ENCODE measurements at regions of chr11 and their contacts with region 1.

Region 1: DNA sequence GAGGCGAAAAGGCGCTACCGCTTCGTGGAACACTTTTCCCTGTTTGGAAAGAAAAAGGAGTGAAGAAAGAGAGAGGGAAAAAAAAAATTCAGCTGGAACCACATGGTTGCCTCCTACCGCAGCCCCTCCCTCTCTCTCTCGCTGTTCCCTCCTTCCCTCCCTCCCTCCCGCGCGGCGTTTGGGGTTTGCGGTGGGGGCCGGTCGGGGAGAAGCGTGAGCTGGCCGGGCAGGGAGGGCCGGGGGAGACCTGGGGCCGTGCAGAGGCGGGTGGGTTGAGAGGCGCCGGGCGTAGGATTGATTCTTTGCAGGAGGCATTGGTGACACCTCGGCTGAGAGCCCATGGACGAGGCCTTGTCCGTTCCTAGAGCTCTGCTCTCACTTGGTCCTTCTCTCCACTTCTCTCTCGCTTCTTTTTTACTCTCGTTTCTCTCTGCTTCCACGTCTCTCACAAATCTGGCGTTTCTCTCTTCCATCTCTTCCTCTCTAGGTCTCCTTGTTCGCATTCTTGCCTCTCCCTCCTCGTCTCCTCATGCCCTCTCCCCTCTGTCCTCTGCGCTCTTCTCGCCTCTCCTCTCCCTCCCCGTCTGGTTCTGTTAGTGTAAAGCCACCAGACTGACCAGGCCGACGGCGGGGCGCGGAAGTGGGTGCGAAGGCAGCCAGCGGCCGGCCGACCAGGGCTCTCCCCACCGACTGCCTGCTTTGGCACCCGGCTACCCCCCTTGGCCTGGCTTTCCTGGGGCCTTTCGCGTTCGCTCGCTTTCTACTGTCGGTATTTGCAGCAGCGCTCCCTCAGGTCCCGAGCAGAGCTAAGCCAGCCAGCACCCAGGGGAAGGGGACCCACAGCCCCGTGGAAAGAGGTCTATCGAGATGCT is at the start of gene CLMP:
- DNase-seq: peak; percentile 54 to 87
- H3K4me3 ChIP-seq: peak within 1 kb of the TSS; percentile 76 to 79
- H3K27ac ChIP-seq: peak within 1 kb of the TSS; percentile 92 to 96
- H3K4me1 ChIP-seq: peaks cover 0 to 13% of the 10 kb centered on the region in 2 donors
- H3K27me3 ChIP-seq: no peaks in the 10 kb centered on the region
- CTCF ChIP-seq: no peak
- total RNA-seq, gene CLMP: 70.6 TPM

Region 2: DNA sequence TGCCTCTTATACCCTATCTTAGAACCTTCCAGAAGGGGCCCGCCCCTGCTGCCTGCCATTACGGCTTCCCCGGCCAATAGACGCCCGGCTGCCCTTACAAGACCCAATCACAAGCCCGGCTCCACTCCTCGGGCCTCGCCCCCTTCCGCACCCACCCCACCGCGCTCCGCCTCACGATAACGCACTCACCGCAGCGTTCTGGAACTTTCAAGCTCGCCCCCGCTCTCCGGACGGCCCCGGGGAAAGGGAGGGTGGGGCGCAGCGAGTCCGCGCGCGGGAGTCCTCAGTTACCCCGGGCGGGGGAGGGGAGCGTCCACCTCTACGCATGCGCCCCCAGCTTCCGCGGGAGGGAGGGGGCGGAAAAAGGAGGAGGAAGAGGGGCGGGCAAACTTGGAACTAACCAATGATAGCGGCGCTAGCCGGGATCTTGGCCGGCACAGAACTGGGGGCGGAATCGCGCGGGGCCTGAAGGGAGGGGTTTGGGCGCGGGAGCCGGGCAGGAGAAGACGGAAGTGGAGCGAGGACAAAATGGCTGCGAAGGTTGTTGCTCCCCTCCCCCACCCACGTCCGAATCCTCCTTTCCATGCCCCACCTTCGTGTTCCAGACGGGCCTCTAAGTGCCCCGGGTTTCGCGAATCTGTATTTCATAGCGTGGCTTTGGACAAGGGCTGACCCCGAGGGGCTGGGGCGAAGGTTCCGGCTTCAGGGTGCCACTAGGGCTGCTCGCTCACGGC is 133.1 kb before region 1 on chr11:
- intact Hi-C with region 1: loop called (anchors 5 kb)
- DNase-seq: peak; percentile 99 to 100
- H3K4me3 ChIP-seq: peak overlapping the region; percentile 83 to 88
- H3K27ac ChIP-seq: peak overlapping the region; percentile 98 to 100
- H3K4me1 ChIP-seq: peaks cover 6 to 41% of the 10 kb centered on the region in 2 donors
- H3K27me3 ChIP-seq: no peaks in the 10 kb centered on the region
- CTCF ChIP-seq: no peak

Region 3: DNA sequence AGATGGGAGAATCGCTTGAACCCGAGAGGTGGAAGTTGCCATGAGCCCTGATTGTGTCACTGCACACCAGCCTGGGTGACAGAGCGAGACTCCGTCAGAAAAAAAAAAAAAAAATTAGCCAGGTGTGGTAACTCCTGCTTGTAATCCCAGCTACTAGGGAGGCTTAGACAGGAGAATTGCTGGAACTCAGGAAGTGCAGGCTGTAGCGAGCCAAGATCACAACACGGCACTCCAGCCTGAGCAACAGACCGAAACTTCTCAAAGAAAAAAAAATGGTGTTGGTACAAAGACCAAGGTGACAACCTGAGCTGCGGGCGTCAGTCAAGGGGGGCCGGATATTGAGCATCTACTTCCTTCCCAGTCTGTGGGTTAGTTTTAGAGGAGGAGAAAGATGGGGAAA is 85.1 kb before region 1 on chr11:
- intact Hi-C with region 1: loop called (anchors 2 kb)
- DNase-seq: no peak
- H3K4me3 ChIP-seq: no peak overlapping the region
- H3K27ac ChIP-seq: peak overlapping the region; percentile 76 to 80
- H3K4me1 ChIP-seq: peaks cover 5 to 21% of the 10 kb centered on the region in 2 donors
- H3K27me3 ChIP-seq: no peaks in the 10 kb centered on the region
- CTCF ChIP-seq: no peak

Region 4: GRCh38 chr11:123122341-123122740 is 73.1 kb before region 1 on chr11:
- intact Hi-C with region 1: loop called (anchors 2 kb)
- DNase-seq: peak in 1 of 2 donors; percentile 89
- H3K4me3 ChIP-seq: peak overlapping the region in 1 of 2 donors; percentile 4
- H3K27ac ChIP-seq: peak overlapping the region; percentile 89 to 91
- H3K4me1 ChIP-seq: peaks cover 3 to 31% of the 10 kb centered on the region in 2 donors
- H3K27me3 ChIP-seq: no peaks in the 10 kb centered on the region
- CTCF ChIP-seq: no peak

Region 5: DNA sequence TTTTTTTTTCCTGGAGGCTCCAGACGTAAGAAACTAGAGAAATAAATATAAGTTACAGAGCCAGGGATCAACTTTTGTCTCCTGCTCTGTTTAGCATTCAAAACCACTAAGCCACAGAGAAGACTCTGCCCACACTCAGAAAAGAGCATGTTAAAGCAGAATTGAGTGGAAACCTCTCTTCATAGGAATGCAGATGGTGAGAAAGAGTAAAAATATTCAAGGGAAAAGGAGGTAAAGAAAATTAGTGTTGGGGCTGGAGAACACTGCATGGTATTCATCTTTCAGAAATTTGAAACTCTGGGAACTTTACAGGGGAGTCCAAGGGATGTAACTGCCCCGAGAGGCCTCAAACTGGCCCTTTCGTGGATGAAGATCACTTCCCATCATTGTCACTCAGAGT is 65.5 kb before region 1 on chr11:
- intact Hi-C with region 1: loop called (anchors 2 kb)
- DNase-seq: no peak
- H3K4me3 ChIP-seq: no peak overlapping the region
- H3K27ac ChIP-seq: peak overlapping the region in 1 of 2 donors; percentile 87
- H3K4me1 ChIP-seq: peaks cover 2 to 40% of the 10 kb centered on the region in 2 donors
- H3K27me3 ChIP-seq: no peaks in the 10 kb centered on the region
- CTCF ChIP-seq: no peak

Region 6: GRCh38 chr11:123159183-123159857 is 36.1 kb before region 1 on chr11:
- intact Hi-C with region 1: loop called (anchors 2 kb)
- DNase-seq: peak; percentile 68 to 90
- H3K4me3 ChIP-seq: no peak overlapping the region
- H3K27ac ChIP-seq: peak overlapping the region; percentile 84 to 93
- H3K4me1 ChIP-seq: peaks cover 2 to 42% of the 10 kb centered on the region in 2 donors
- H3K27me3 ChIP-seq: no peaks in the 10 kb centered on the region
- CTCF ChIP-seq: no peak

Region 7: GRCh38 chr11:123235117-123235655 is 39.8 kb after region 1 on chr11:
- intact Hi-C with region 1: loop called (anchors 2 kb)
- DNase-seq: peak in 1 of 2 donors; percentile 82
- H3K4me3 ChIP-seq: peak overlapping the region in 1 of 2 donors; percentile 25
- H3K27ac ChIP-seq: peak overlapping the region; percentile 58 to 59
- H3K4me1 ChIP-seq: peaks cover 0 to 3% of the 10 kb centered on the region in 2 donors
- H3K27me3 ChIP-seq: no peaks in the 10 kb centered on the region
- CTCF ChIP-seq: peak; percentile 63 to 83 (median 63)

Measured in ascending aorta (tissue), 2 donors.